Kidney (tissue), 22 donors: ENCODE measurements at regions of chr9 and their contacts with region 1.

Region 1: DNA sequence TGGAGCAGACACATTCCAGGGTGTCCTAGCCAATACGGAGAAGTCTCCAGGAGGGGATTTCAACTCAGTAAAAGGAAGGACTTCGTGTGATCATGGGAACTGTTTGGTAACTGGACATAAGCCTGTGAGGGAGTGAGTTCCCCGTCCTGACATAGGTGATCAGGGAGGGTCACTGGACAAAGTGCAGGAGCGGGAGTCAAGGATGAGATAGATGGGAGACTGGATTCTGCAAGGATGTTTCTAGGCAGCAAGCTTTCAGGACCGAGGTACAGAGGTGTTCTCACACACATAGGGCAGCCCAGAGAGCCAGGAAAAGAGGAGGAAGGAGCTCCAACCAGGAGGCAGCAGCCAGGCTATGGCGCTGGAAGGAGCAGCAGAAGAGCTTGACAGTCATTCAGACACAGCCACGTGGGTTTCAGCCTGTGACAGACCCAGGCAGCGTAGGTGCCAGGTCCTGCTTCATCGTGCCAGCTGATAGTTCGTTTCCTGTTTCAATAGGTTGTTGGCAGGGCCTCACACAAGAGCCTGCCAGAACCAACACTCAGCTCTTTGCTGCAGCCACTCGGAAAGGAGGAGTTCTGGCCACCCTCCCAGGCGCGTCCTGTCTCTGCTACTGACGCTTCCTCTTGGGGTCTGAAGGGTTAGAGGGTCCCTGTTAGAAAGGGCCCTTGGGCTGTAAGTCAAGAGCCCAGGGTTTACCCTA is 84.1 kb downstream of the AMBP start:
- DNase-seq: peak in 4 of 5 donors; percentile 14 to 91 (median 42)
- H3K4me3 ChIP-seq: no peak overlapping the region
- H3K27ac ChIP-seq: peak overlapping the region in 1 of 2 donors; percentile 23
- H3K4me1 ChIP-seq: peaks cover 0 to 52% (median 35%) of the 10 kb centered on the region in 3 donors
- H3K27me3 ChIP-seq: no peaks in the 10 kb centered on the region
- CTCF ChIP-seq: no peak

Region 2: DNA sequence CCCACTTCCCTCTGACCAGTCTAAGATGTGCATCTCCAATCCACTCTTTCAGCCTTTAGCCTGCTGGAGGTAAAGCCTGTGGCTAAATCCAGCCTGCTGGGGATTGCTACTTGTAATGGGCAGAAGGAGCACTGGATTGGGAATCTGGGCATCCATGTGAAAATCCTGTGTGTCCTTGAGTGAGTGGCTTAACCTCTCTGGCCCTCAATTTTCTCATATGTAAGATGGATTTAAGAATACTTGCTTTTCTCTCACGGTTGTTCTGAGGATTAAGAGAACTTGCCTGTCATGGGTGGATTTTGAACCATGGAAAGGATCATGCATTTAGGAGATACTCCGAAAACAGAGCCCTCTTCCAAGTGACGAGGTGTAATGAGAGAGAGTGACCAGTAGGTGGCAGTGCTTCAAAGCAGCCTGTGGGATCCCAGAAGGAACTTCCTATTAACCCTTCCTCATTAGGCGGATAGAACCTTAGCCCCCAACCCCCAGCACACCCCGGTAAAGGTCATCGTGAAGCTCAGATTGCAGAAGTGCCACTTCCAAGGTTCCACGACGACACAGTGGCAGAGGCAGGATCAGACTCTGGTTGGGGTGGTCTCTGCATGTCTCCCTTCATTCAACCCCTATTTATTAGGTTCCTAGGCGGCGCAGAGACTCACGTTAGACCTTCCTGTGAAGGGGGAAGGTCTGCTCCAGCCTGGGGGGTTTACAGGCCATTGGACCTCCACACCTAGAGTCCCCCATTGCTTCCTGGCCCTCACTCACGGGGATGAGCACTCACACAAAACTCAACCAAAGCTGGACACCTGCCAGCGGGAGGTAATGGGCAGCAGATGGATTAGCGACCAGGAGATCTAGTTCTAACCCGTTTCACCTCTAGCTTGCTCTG is 186.6 kb before region 1 on chr9:
- intact Hi-C with region 1: loop called (anchors 5 kb)
- DNase-seq: peak in 4 of 5 donors; percentile 54 to 73 (median 62)
- H3K4me3 ChIP-seq: peak overlapping the region; percentile 23 to 48 (median 43)
- H3K27ac ChIP-seq: no peak overlapping the region
- H3K4me1 ChIP-seq: peaks cover 0 to 4% (median 3%) of the 10 kb centered on the region in 3 donors
- H3K27me3 ChIP-seq: no peaks in the 10 kb centered on the region
- CTCF ChIP-seq: peak; percentile 87

Region 3: GRCh38 chr9:113876151-113876992 is 117.6 kb before region 1 on chr9 and contains the start of gene ZNF618:
- intact Hi-C with region 1: loop called (anchors 10 kb)
- DNase-seq: peak; percentile 42 to 77 (median 58)
- H3K4me3 ChIP-seq: peak within 1 kb of the TSS; percentile 72 to 76 (median 73)
- H3K27ac ChIP-seq: peak within 1 kb of the TSS; percentile 51 to 60
- H3K4me1 ChIP-seq: peaks cover 0 to 2% (median 0%) of the 10 kb centered on the region in 3 donors
- H3K27me3 ChIP-seq: no peaks in the 10 kb centered on the region
- CTCF ChIP-seq: no peak
- total RNA-seq, gene ZNF618: 31.9 TPM